ENCODE measurements at regions of chr6 and their contacts with region 1.

Region 1: DNA sequence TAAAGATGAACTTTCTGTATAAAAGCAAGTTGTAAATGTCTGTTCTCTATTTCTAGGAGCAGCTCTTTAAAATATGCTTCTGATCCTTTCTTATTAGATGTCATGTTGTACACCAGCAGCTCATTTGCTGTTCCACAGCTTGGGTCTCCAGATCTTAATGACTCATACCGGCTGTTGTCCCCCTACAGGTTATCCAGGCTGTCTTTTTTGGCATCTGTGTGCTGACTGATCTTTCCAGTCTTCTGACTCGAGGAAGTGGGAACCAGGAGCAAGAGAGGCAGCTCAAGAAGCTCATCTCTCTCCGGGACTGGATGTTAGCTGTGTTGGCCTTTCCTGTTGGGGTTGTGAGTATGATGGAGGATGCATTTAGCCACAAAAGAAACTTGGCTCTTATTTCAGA is 76.0 kb downstream of the AIG1 start:
- DNase-seq: no peak
- ATAC-seq: no peak
- H3K4me3 ChIP-seq: no peak overlapping the region
- H3K4me3 Mint-ChIP-seq: peak overlapping the region in 8 of 10 donors; percentile 5 to 30 (median 14)
- H3K27ac ChIP-seq: no peak overlapping the region
- H3K27ac Mint-ChIP-seq: peak overlapping the region in 8 of 9 donors; percentile 7 to 83 (median 60)
- H3K4me1 ChIP-seq: peaks cover 0 to 14% of the 10 kb centered on the region in 2 donors
- H3K4me1 Mint-ChIP-seq: peaks cover 3 to 36% (median 28%) of the 10 kb centered on the region in 7 donors
- H3K27me3 ChIP-seq: no peaks in the 10 kb centered on the region
- H3K27me3 Mint-ChIP-seq: no peaks in the 10 kb centered on the region

Region 2: DNA sequence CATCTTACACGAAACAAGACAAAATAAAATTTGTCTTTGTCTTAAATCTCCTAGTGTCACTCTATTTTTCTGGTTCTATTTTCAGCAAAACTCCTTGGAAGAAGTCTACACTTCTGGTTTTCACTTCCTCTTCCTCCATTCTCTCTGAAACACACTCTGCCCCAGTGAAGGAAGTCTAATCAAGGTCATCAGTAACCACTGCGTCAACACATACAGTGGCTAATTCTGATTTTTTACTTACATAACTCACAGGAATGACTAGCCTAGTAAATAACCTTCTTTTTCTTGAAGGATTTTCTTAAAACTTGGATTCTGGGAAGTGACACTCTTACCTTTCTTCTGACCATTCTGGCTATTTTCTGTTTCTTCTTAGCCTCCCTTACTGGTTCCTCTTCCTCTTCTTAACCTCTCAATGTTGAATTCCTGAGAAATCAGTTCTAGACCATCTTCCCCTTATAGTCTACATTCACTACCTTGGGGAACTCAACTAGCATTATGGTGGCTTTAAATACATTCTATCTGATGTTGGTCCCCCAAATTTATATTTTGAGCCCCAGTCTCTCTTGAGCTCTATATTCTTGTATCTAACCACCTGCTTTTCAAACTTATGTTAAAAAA is 38.5 kb before region 1 on chr6:
- CTCF ChIA-PET with region 1: interaction called, 3 read pairs
- POLR2A ChIA-PET with region 1: no interaction called
- intact Hi-C with region 1: loop called in 1 of 2 experiments (anchors 2 kb)
- DNase-seq: peak in 3 of 9 donors; percentile 5 to 21 (median 9)
- ATAC-seq: peak; percentile 80
- H3K4me3 ChIP-seq: no peak overlapping the region
- H3K4me3 Mint-ChIP-seq: no peak overlapping the region
- H3K27ac ChIP-seq: no peak overlapping the region
- H3K27ac Mint-ChIP-seq: no peak overlapping the region
- H3K4me1 ChIP-seq: peaks cover 12 to 22% of the 10 kb centered on the region in 2 donors
- H3K4me1 Mint-ChIP-seq: peaks cover 0 to 13% (median 5%) of the 10 kb centered on the region in 7 donors
- H3K27me3 ChIP-seq: no peaks in the 10 kb centered on the region
- H3K27me3 Mint-ChIP-seq: no peaks in the 10 kb centered on the region

Region 3: GRCh38 chr6:143859888-143860660 is 723.4 kb after region 1 on chr6:
- CTCF ChIA-PET with region 1: no interaction called
- POLR2A ChIA-PET with region 1: no interaction called
- intact Hi-C with region 1: no loop called
- DNase-seq: no peak
- ATAC-seq: no peak
- H3K4me3 ChIP-seq: no peak overlapping the region
- H3K4me3 Mint-ChIP-seq: no peak overlapping the region
- H3K27ac ChIP-seq: no peak overlapping the region
- H3K27ac Mint-ChIP-seq: no peak overlapping the region
- H3K4me1 ChIP-seq: no peaks in the 10 kb centered on the region
- H3K4me1 Mint-ChIP-seq: peaks cover 0 to 16% (median 3%) of the 10 kb centered on the region in 7 donors
- H3K27me3 ChIP-seq: no peaks in the 10 kb centered on the region
- H3K27me3 Mint-ChIP-seq: no peaks in the 10 kb centered on the region

Measured in naive thymus-derived CD4-positive, alpha-beta T cell (primary cell).